Activated CD4-positive, alpha-beta T cell treated with anti-CD3 and anti-CD28 coated beads for 36 hours (primary cell): ENCODE measurements at regions of chr19 and their contacts with region 1.

Region 1: GRCh38 chr19:7680606-7681339 is at the start of gene TRAPPC5:
- DNase-seq: peak; percentile 93
- ATAC-seq: peak; percentile 25
- H3K4me3 Mint-ChIP-seq: peak within 1 kb of the TSS; percentile 91
- H3K27ac Mint-ChIP-seq: peak within 1 kb of the TSS; percentile 91
- H3K4me1 Mint-ChIP-seq: peaks cover 51% of the 10 kb centered on the region
- H3K27me3 Mint-ChIP-seq: peaks cover 18% of the 10 kb centered on the region
- total RNA-seq, gene TRAPPC5: 90.2 to 95.2 TPM

Region 2: DNA sequence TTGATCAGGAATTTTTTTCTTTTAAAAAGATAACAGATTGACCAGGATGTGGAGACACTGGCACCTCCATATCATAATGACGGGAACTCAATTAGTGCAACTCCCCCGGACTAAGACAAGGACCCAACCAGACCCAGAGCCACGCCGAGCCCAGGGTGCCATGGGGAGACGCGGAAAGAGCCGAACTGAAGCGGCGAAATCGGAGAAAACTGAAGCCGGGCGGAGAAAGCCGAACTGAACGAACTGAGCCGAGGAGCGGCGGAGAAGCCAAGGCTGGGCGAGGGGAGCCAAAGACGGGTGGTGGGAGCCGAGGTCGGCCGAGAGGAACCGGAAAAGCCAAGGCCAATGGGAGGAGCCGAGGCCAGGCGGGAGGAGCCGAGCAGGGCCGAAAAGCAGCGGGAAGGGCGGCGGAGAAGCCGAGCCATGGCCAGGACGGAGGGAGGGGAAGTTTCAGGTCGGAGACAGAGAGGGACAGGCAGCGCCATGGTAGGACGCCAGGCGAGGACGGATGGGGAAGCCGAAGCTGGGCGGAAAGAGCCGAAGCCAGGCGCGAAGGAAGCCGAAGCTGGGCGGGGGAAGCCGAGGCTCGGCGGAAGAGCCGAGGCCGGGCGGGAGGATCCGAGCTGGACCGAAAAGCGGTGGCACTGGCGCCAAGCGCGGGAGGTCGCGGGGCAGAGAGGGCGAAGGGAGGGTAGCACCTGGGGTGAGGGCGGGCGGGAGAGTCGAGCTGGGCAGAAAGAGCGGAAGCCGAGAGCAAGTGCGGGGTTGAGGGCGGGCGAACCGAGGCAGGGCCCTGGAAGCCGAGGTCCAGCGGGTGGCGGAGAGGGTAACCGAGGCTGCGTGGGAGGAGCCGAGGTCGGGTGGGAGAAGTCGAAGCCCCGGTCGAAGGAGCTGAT is 581.8 kb before region 1 on chr19:
- CTCF ChIA-PET with region 1: no interaction called
- POLR2A ChIA-PET with region 1: no interaction called
- intact Hi-C with region 1: loop called in 1 of 2 experiments (anchors 2 kb)
- DNase-seq: peak; percentile 94
- ATAC-seq: peak; percentile 95
- H3K4me3 Mint-ChIP-seq: peak overlapping the region; percentile 90
- H3K27ac Mint-ChIP-seq: peak overlapping the region; percentile 92
- H3K4me1 Mint-ChIP-seq: peaks cover 27% of the 10 kb centered on the region
- H3K27me3 Mint-ChIP-seq: no peaks in the 10 kb centered on the region

Region 3: GRCh38 chr19:7562646-7563393 is 118.0 kb before region 1 on chr19:
- CTCF ChIA-PET with region 1: interaction called, 14 read pairs
- POLR2A ChIA-PET with region 1: no interaction called
- intact Hi-C with region 1: loop called (anchors 1 kb)
- DNase-seq: peak; percentile 31
- ATAC-seq: no peak
- H3K4me3 Mint-ChIP-seq: no peak overlapping the region
- H3K27ac Mint-ChIP-seq: no peak overlapping the region
- H3K4me1 Mint-ChIP-seq: no peaks in the 10 kb centered on the region
- H3K27me3 Mint-ChIP-seq: no peaks in the 10 kb centered on the region

Region 4: DNA sequence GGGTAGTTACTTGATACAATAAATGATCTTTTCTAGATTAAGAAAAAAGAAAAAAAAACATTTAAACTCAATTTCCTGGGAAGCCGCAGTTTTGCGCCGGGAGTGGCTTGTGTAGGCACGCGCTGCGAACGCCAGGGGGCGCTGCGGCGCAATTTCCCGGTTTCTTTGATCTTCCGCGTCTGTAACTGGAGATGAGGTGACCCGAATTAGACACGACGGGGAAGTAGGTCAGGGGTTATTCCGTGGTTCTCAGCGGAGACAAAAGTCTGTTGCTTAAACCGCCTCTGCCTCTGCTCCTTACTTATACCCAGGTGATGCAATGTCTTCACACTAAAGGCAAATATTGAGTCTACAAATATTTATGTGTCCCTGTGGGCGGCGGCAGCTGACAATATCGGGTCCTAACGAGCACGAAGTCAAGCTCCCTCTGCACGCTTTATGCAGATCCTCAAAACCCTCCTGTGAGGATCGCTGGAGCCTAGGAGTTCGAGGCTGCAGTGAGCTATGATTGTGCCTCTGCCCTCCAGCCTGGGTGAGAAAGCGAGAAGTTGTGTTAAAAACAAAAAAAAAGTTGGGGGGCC is 28.6 kb before region 1 on chr19:
- CTCF ChIA-PET with region 1: interaction called, 11 read pairs
- POLR2A ChIA-PET with region 1: interaction called, 3 read pairs
- intact Hi-C with region 1: loop called (anchors 1 kb)
- DNase-seq: peak; percentile 92
- ATAC-seq: peak; percentile 85
- H3K4me3 Mint-ChIP-seq: peak overlapping the region; percentile 37
- H3K27ac Mint-ChIP-seq: peak overlapping the region; percentile 61
- H3K4me1 Mint-ChIP-seq: peaks cover 17% of the 10 kb centered on the region
- H3K27me3 Mint-ChIP-seq: no peaks in the 10 kb centered on the region

Region 5: DNA sequence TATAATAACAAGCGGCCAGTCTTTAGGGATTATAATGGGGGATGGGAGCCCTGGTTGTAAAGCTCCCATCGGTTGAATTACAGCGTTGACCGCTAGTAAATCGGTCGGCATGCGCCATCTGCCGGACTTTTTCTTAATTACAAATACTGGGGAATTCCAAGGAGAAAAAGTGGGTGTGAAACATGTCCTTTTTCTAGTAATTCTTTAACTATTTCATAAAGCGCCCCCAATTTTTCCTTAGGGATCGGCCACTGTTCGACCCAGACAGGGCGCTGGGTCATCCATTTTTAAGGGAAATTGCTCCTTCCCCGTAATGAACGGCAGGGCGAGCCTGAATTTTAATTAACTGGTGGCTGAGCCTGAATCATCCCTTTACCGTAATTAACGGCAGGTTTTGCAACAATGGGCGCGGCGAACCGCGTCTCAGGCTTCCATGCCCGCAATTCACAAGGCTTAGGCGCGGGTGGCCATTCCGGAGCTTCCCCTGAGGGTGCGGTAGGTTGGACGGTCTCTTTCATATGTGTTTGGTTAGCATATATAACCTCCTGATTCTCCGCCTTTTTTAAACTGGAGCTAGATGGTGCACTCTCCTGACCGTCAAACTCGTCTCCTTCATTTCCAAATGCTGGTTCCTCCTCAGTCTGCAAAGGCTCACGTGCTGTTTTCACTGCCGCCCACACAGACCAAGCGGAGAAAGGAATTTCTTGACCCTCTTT is 119.0 kb after region 1 on chr19:
- CTCF ChIA-PET with region 1: interaction called, 19 read pairs
- POLR2A ChIA-PET with region 1: no interaction called
- intact Hi-C with region 1: loop called (anchors 1 kb)
- DNase-seq: peak; percentile 73
- ATAC-seq: peak; percentile 63
- H3K4me3 Mint-ChIP-seq: peak overlapping the region; percentile 21
- H3K27ac Mint-ChIP-seq: no peak overlapping the region
- H3K4me1 Mint-ChIP-seq: peaks cover 8% of the 10 kb centered on the region
- H3K27me3 Mint-ChIP-seq: peaks cover 32% of the 10 kb centered on the region

Region 6: GRCh38 chr19:7868676-7869452 is 188.1 kb after region 1 on chr19:
- CTCF ChIA-PET with region 1: no interaction called
- POLR2A ChIA-PET with region 1: no interaction called
- intact Hi-C with region 1: loop called in 1 of 2 experiments (anchors 1 kb)
- DNase-seq: peak; percentile 92
- ATAC-seq: peak; percentile 75
- H3K4me3 Mint-ChIP-seq: peak overlapping the region; percentile 70
- H3K27ac Mint-ChIP-seq: peak overlapping the region; percentile 51
- H3K4me1 Mint-ChIP-seq: peaks cover 47% of the 10 kb centered on the region
- H3K27me3 Mint-ChIP-seq: peaks cover 29% of the 10 kb centered on the region

Region 7: GRCh38 chr19:7943444-7944176 is 262.8 kb after region 1 on chr19 and contains the start of gene TIMM44:
- CTCF ChIA-PET with region 1: no interaction called
- POLR2A ChIA-PET with region 1: no interaction called
- intact Hi-C with region 1: loop called in 1 of 2 experiments (anchors 1 kb)
- DNase-seq: peak; percentile 99
- ATAC-seq: peak; percentile 99
- H3K4me3 Mint-ChIP-seq: peak within 1 kb of the TSS; percentile 90
- H3K27ac Mint-ChIP-seq: peak within 1 kb of the TSS; percentile 90
- H3K4me1 Mint-ChIP-seq: peaks cover 30% of the 10 kb centered on the region
- H3K27me3 Mint-ChIP-seq: no peaks in the 10 kb centered on the region
- total RNA-seq, gene TIMM44: 80.4 to 84.0 TPM